ENCODE measurements at regions of chr10 and their contacts with region 1.

Region 1: GRCh38 chr10:37754538-37755323 is 102.7 kb downstream of the ZNF248 start:
- DNase-seq: no peak
- ATAC-seq: peak; percentile 54 to 70

Region 2: GRCh38 chr10:36602374-36602773 is 1152.4 kb before region 1 on chr10:
- intact Hi-C with region 1: no loop called
- DNase-seq: no peak
- ATAC-seq: peak in 1 of 2 donors; percentile 44

Region 3: DNA sequence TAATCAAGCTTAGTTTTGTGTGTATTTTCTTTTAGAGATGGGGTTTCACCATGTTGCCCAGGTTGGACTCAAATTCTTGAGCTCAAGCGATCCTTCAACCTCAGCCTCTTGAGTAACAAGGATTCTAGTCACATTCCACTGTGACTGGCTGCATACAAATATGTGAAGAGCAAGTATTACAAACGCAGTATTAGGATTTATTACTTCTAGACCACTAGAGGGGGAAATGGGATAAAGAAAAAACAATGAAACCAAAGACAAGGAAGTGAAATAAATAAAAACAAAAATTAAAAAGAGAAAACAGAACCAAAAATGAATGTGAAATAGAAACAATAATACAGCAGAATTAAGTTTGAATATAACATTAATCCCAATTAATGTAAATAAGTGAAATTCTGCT is 320.6 kb before region 1 on chr10:
- intact Hi-C with region 1: loop called (anchors 2 to 5 kb)
- DNase-seq: no peak
- ATAC-seq: no peak